ENCODE measurements at regions of chr12 and their contacts with region 1.

Region 1: DNA sequence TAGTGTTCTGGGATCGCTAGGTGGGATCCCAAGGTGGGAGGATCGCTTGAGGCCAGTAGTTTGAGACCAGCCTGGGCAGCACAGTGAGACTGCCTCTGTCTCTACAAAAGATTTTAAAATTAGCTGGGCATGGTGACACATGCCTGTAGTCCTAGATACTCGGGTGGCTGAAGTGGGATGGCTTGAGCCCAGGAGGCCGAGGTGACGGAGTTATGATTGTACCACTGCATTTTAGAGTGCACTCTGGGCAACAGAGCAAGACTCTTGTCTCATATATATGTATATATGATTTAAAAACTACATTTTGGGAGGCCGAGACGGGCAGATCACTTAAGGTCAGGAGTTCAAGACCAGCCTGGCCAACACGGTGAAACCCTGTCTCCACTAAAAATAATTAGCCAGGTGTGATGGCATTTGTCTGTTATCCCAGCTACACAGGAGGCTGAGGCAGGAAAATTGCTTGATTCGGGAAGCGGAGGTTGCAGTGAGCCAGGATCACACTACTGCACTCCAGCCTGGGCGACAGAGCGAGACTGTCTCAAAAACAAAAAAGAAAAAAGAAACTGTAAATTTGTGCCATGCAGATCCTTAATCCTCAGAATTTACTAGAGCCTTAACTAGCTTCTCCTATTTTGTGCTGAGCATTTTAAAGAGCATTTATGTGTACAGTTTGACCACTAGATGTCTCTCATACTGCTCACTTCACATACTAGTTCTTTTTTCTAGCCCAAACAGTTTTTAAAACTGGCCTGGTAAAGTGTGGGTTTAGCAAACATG is 114.8 kb downstream of the MON2 start:
- DNase-seq: peak in 2 of 3 donors; percentile 53 to 55
- ATAC-seq: peak; percentile 80
- H3K4me3 ChIP-seq: no peak overlapping the region
- H3K27ac ChIP-seq: no peak overlapping the region
- H3K4me1 ChIP-seq: no peaks in the 10 kb centered on the region
- H3K27me3 ChIP-seq: no peaks in the 10 kb centered on the region

Region 2: DNA sequence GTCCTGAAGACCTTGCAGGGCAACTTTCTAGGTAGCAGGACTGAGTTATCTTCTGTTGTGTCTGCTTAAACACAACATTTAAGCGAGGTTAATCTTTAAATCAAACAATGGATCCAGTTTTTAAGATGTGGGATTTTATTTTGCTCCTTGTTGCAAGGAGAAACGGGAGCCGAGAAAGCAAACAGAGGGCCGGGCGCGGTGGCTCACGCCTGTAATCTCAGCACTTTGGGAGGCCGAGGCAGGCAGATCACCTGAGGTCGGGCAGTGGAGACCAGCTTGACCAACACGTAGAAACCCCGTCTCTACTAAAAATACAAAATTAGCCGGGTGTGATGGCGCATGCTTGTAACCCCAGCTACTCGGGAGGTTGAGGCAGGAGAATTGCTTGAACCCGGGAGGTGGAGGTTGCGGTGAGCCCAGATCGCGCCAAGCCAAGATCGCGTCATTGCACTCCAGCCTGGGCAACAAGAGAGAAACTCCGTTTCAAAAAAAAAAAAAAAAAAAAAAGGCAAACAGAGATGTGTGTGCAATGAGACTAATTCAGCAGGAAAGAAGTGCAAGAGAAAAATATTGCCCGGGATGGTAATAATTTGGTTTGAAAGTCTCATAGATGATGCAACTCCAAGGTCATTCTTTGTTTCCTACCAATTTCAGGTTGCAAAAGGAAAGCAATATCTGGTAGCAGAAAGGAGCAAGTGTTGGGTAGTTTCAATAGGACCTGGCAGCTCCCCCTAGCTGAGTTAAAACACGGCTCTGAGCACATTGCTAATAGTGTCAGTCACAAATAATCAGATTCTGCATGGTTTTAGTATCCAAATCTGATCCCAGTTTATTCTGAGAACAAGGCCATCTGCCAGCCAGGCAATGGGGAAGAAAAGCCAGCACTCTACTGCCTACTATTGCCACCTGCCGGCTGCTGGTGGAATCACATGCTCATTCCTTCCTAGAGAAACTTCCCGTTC is 212.1 kb after region 1 on chr12:
- intact Hi-C with region 1: loop called in 3 of 4 experiments (anchors 2 to 5 kb)
- DNase-seq: peak; percentile 83 to 94 (median 92)
- ATAC-seq: peak; percentile 65 to 72
- H3K4me3 ChIP-seq: no peak overlapping the region
- H3K27ac ChIP-seq: no peak overlapping the region
- H3K4me1 ChIP-seq: no peaks in the 10 kb centered on the region
- H3K27me3 ChIP-seq: no peaks in the 10 kb centered on the region

Region 3: GRCh38 chr12:62799126-62799736 is 217.8 kb after region 1 on chr12:
- intact Hi-C with region 1: loop called in 3 of 4 experiments (anchors 2 to 5 kb)
- DNase-seq: peak in 1 of 3 donors; percentile 28
- ATAC-seq: peak; percentile 78 to 85
- H3K4me3 ChIP-seq: no peak overlapping the region
- H3K27ac ChIP-seq: no peak overlapping the region
- H3K4me1 ChIP-seq: no peaks in the 10 kb centered on the region
- H3K27me3 ChIP-seq: no peaks in the 10 kb centered on the region